Ascending aorta (tissue), 2 donors: ENCODE measurements at regions of chr4 and their contacts with region 1.

Region 1: DNA sequence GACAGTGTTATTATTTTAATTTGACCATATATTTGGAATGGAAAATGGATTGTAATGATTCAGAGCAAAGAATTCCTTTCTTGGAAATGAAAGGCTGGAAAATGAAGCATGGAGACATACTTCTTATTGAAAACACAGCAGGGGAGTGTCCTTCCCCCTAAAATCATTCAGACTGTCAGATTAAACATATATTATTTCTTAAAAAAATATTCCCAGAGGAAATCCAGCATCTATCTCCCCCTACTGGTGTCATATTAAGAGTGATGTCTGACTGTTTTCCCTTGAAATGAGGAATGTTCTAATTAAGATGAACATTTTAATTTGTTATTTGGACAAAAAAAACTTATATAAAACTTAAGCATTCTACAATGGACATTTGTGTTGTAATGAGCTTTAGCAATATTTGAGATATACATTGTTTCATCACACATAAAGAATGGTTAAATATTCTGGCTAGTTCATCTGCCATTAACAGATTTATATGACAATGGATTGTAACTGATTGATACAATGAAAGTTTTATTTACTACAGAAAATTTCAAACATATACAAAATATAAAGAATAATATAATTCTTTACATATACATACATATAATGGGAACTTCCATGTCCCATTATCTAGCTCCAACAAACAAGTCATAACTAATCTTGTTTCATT is 264.6 kb downstream of the SPRY1 start:
- DNase-seq: no peak
- H3K4me3 ChIP-seq: no peak overlapping the region
- H3K27ac ChIP-seq: no peak overlapping the region
- H3K4me1 ChIP-seq: no peaks in the 10 kb centered on the region
- H3K27me3 ChIP-seq: no peaks in the 10 kb centered on the region
- CTCF ChIP-seq: peak; percentile 28 to 50 (median 42)

Region 2: DNA sequence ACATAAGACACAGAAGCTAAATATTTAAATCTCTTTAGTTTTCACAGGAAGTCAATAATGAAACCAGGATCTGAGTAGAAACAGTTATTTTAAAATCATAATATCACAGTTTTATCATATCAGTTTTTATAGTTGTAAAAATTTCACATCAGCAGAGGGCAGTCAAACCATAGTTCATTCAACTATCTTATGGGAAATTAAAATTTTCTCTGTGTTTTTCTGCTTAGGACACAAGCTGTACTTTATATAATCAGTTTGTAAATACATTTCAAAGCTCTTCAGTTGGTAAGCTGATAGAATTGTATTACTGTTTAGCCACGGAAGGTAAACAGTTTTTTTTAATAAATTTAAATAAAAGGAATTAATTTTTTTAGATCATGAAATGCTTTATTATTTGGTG is 534.0 kb before region 1 on chr4:
- intact Hi-C with region 1: loop called (anchors 1 kb)
- DNase-seq: no peak
- H3K4me3 ChIP-seq: no peak overlapping the region
- H3K27ac ChIP-seq: no peak overlapping the region
- H3K4me1 ChIP-seq: peaks cover 0 to 3% of the 10 kb centered on the region in 2 donors
- H3K27me3 ChIP-seq: no peaks in the 10 kb centered on the region
- CTCF ChIP-seq: peak; percentile 22 to 45 (median 39)

Region 3: GRCh38 chr4:124266721-124267120 is 605.5 kb after region 1 on chr4:
- intact Hi-C with region 1: no loop called
- DNase-seq: no peak
- H3K4me3 ChIP-seq: no peak overlapping the region
- H3K27ac ChIP-seq: no peak overlapping the region
- H3K4me1 ChIP-seq: no peaks in the 10 kb centered on the region
- H3K27me3 ChIP-seq: no peaks in the 10 kb centered on the region
- CTCF ChIP-seq: no peak